ENCODE measurements at regions of chr4 and their contacts with region 1.

Region 1: DNA sequence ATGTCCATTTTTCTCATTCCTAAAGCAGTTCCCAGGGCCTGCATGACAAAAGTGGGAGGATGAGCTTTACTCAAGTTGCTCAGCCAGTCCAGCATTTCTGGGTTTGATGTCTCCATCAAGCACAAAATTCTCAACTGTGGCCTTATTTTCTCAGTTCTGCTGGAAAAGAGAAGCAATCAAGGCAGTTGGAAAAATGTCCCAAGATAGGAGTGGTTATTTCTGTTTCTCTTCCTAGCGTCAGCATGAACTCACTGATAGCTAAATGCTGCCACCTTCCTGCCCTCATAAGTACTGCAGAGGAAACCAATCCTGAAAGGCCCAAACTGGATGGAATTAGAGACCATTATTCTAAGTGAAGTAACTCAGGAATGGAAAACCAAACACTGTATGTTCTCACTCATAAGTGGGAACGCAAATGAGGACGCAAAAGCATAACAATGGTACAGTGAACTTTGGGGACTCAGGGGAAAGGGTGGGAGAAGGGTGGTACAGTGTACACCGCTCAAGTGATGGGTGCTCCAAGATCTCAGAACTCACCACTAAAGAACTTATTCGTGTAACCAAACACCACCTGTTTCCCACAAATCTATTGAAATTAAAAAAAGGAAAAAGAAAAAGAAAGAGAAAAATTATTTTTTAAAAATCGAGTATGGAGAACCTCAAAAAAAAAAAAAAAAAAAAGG is 29.6 kb downstream of the ADH7 start:
- DNase-seq: peak in 4 of 5 donors; percentile 39 to 68 (median 53)
- ATAC-seq: peak; percentile 62 to 86 (median 79)
- H3K4me3 ChIP-seq: no peak overlapping the region
- H3K27ac ChIP-seq: peak overlapping the region in 11 of 12 donors; percentile 35 to 80 (median 60)
- H3K4me1 ChIP-seq: peaks cover 0 to 20% (median 4%) of the 10 kb centered on the region in 12 donors
- H3K27me3 ChIP-seq: no peaks in the 10 kb centered on the region
- CTCF ChIP-seq: peak; percentile 75 to 97 (median 94)
- POLR2A ChIP-seq: no peak

Region 2: GRCh38 chr4:98467627-98468072 is 937.9 kb before region 1 on chr4:
- intact Hi-C with region 1: loop called in 5 of 10 experiments (anchors 5 to 10 kb)
- DNase-seq: peak; percentile 66 to 78 (median 73)
- ATAC-seq: peak; percentile 58 to 97 (median 92)
- H3K4me3 ChIP-seq: peak overlapping the region in 11 of 12 donors; percentile 20 to 53 (median 45)
- H3K27ac ChIP-seq: no peak overlapping the region
- H3K4me1 ChIP-seq: peaks cover 0 to 20% (median 10%) of the 10 kb centered on the region in 12 donors
- H3K27me3 ChIP-seq: no peaks in the 10 kb centered on the region
- CTCF ChIP-seq: peak; percentile 57 to 82 (median 71)
- POLR2A ChIP-seq: no peak

Region 3: DNA sequence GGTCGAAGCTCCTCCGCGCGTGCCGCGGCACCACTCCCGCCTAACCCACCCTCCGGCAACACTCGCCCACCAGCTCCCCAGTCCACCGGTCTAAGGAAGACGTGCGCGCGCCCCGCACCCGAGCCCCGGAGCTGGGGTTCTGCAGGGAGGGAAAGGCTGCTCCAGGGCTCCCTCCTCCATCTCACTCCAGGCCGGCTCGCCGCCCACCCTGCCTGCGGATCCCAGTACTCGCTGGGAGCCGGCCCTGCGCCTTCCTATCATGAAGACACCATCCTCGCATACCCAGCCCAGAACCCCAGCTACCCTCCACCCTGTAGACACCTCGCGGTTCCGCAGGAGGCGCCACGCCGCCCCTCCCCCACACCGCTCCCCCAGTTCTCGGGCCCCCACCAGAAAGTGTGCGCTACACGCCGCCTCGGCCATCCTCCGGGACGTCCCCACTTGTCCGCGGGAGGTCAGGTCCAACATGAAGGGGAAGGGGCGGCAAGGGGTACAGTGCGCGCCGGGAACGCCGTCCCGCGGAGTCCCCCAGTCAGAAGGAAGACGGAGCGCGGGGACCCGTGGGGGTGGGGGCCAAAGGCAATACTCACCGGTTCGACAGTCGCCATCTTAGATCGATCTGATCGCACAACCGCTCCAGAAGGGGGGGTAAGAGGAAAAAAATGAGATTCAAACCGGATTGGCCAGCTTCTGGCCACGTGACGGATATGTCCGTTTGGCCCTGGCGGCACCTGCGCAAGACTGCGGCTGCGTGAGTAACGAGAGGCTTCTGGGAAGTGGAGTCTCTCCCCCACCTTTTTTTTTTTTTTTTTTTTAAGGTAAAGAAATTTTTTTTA is 476.9 kb before region 1 on chr4 and contains the start of gene EIF4E:
- intact Hi-C with region 1: loop called in 3 of 10 experiments (anchors 10 kb)
- DNase-seq: peak; percentile 97 to 99 (median 99)
- ATAC-seq: peak; percentile 94 to 96 (median 95)
- H3K4me3 ChIP-seq: peak within 1 kb of the TSS; percentile 57 to 99 (median 87)
- H3K27ac ChIP-seq: peak within 1 kb of the TSS; percentile 76 to 99 (median 93)
- H3K4me1 ChIP-seq: peaks cover 0 to 58% (median 13%) of the 10 kb centered on the region in 12 donors
- H3K27me3 ChIP-seq: no peaks in the 10 kb centered on the region
- CTCF ChIP-seq: peak in 8 of 12 donors; percentile 1 to 39 (median 19)
- POLR2A ChIP-seq: peak in 1 of 2 donors; percentile 45
- total RNA-seq, gene EIF4E: 49.3 to 93.2 (median 62.2) TPM

Region 4: DNA sequence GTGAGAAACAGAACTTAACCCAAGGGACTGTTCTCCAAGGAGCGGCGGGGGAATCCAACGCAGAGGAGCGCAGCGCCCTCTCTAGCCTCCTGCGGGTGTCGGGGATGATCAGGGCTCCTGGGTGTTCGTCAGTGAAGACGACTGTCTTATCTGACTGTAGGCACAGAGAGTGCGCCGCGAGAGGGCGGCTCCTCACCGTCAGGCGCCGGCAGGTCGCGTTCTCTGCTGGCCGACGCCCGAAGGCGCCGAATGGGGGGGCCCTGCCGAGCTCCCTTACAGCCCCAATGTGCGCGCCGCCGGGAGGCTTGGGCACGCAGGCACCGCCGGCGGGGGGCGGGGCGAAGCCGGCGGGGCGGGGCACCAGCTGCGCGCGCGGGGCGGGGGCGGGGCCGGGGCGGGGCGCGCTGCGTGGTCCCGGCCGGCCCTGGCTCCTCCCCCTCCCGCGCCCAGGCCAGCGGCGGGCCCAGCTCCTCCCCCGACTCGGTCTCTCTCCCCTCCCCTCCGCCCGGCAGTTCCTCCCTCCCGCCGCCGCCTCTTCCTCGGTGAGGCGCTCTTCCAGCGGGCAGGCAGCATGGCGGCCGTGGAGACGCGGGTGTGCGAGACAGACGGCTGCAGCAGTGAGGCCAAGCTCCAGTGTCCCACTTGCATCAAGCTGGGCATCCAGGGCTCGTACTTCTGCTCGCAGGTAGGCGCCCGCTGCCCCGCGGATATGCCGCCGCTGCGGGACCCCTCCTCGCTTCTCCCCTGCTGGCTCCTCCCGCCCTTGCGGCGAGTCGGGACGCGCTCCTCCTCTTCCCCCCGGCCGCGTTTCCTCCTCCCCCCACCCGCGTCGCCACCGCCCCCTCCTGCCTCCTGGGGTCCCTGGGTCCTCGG is 410.2 kb before region 1 on chr4 and contains the start of gene METAP1:
- intact Hi-C with region 1: loop called in 4 of 10 experiments (anchors 5 to 10 kb)
- DNase-seq: peak; percentile 94 to 97 (median 96)
- ATAC-seq: peak; percentile 92 to 97 (median 96)
- H3K4me3 ChIP-seq: peak within 1 kb of the TSS; percentile 89 to 99 (median 96)
- H3K27ac ChIP-seq: peak within 1 kb of the TSS; percentile 88 to 96 (median 92)
- H3K4me1 ChIP-seq: peaks cover 0 to 26% (median 15%) of the 10 kb centered on the region in 12 donors
- H3K27me3 ChIP-seq: no peaks in the 10 kb centered on the region
- CTCF ChIP-seq: peak; percentile 32 to 80 (median 56)
- POLR2A ChIP-seq: peak; percentile 26 to 69
- total RNA-seq, gene METAP1: 51.8 to 71.4 (median 63.6) TPM

Region 5: DNA sequence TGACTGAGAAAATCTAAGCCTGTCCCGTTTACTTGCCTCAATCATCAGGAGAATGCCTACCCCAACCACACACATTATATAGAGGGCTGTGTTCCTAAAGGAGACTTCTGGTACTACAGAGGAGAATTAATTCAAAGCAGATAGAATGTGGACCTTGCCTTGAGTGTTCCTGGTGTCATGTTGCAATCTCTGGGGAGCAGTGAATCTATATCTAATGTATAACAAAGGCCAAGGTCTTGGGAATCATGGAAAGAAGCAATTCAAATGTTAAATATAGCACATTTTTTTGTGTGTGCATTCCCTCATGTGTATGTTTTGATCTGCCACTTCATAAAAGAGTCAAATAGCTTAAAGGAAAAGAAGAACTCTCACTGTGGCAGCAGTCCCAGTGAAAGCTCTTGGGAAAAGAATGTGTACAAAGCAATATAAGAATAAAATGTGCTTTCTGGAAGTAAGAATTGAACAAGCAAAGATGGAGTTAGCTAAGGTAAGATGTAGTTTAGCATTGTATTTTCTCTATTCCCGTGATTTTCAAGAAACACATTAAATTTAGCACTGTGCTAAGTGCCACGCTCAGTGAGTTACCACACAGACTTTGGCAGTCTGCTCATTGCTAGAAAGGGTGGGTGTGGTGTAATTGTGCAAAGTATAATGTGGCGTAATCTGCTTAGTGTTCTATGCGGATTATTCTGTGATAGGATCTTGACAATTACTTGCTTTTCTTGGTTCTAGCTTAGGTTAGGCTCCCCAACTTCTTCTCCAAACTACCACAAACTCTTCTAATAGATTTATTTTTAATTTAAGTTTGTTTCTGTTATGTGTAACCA is 200.2 kb before region 1 on chr4:
- intact Hi-C with region 1: loop called in 9 of 10 experiments (anchors 1 to 10 kb)
- DNase-seq: peak in 1 of 5 donors; percentile 27
- ATAC-seq: peak in 2 of 4 donors; percentile 71 to 85
- H3K4me3 ChIP-seq: no peak overlapping the region
- H3K27ac ChIP-seq: no peak overlapping the region
- H3K4me1 ChIP-seq: peaks cover 0 to 11% (median 1%) of the 10 kb centered on the region in 12 donors
- H3K27me3 ChIP-seq: no peaks in the 10 kb centered on the region
- CTCF ChIP-seq: no peak
- POLR2A ChIP-seq: no peak

Region 6: DNA sequence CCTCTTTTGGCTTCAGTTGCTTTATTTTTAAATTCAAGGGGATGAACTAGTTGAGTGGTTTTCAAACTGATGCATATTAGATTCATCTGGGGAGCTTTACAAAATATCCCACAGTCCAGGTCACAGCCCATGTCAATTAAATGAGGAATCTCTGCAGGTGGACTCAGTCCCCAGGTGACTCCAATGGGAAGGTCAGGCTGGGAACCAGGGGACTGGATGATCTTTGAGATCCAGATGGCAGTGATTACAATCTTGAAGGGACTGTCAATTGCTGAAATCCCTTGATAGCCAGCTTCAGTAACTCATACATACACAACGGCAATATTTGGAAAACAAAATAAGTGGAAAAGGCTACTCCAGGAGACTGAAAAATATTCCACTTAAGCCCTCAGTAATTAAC is 91.4 kb before region 1 on chr4:
- intact Hi-C with region 1: loop called in 1 of 10 experiments (anchors 10 kb)
- DNase-seq: no peak
- ATAC-seq: no peak
- H3K4me3 ChIP-seq: no peak overlapping the region
- H3K27ac ChIP-seq: no peak overlapping the region
- H3K4me1 ChIP-seq: no peaks in the 10 kb centered on the region
- H3K27me3 ChIP-seq: no peaks in the 10 kb centered on the region
- CTCF ChIP-seq: no peak
- POLR2A ChIP-seq: no peak

Region 7: DNA sequence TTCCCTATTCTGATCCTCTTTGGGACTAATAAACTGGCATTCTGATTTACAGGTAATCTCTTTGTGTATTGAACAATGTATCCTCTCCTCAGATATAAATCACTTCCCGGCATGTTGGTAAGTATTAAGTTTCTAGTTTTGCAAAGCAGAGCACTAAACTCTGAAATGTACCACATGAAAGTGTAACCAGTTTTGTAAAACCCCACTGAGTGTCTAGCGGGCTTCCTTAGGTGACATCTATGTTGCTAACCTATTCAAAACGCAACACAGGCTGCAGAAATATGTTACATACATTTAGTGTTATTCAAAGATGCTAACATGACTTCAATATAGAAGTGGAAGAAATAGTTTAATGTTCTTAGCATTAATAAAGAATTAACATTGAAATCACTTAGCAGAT is 515.6 kb after region 1 on chr4:
- intact Hi-C with region 1: no loop called
- DNase-seq: no peak
- ATAC-seq: no peak
- H3K4me3 ChIP-seq: no peak overlapping the region
- H3K27ac ChIP-seq: no peak overlapping the region
- H3K4me1 ChIP-seq: no peaks in the 10 kb centered on the region
- H3K27me3 ChIP-seq: no peaks in the 10 kb centered on the region
- CTCF ChIP-seq: no peak
- POLR2A ChIP-seq: no peak